ENCODE measurements at regions of chr4 and their contacts with region 1.

Region 1: GRCh38 chr4:121869841-121870656 is at the start of gene BBS7:
- DNase-seq: peak; percentile 95
- H3K4me3 Mint-ChIP-seq: peak within 1 kb of the TSS; percentile 89
- H3K27ac Mint-ChIP-seq: peak within 1 kb of the TSS; percentile 77
- H3K4me1 Mint-ChIP-seq: peaks cover 12% of the 10 kb centered on the region
- H3K27me3 Mint-ChIP-seq: no peaks in the 10 kb centered on the region
- CTCF ChIP-seq: no peak
- total RNA-seq, gene BBS7: 22.1 and 25.5 TPM in 2 replicates

Region 2: GRCh38 chr4:121823505-121824170 is 46.4 kb before region 1 on chr4 and contains the start of gene CCNA2:
- CTCF ChIA-PET with region 1: interaction called, 3 read pairs
- POLR2A ChIA-PET with region 1: interaction called, 19 read pairs
- intact Hi-C with region 1: no loop called
- DNase-seq: peak; percentile 99
- H3K4me3 Mint-ChIP-seq: peak within 1 kb of the TSS; percentile 82
- H3K27ac Mint-ChIP-seq: peak within 1 kb of the TSS; percentile 91
- H3K4me1 Mint-ChIP-seq: peaks cover 9% of the 10 kb centered on the region
- H3K27me3 Mint-ChIP-seq: no peaks in the 10 kb centered on the region
- CTCF ChIP-seq: no peak
- total RNA-seq, gene CCNA2: 12.1 and 22.0 TPM in 2 replicates